ENCODE measurements at regions of chr4 and their contacts with region 1.

Region 1: GRCh38 chr4:56575820-56576429 is 70.3 kb downstream of the ARL9 start:
- DNase-seq: no peak

Region 2: DNA sequence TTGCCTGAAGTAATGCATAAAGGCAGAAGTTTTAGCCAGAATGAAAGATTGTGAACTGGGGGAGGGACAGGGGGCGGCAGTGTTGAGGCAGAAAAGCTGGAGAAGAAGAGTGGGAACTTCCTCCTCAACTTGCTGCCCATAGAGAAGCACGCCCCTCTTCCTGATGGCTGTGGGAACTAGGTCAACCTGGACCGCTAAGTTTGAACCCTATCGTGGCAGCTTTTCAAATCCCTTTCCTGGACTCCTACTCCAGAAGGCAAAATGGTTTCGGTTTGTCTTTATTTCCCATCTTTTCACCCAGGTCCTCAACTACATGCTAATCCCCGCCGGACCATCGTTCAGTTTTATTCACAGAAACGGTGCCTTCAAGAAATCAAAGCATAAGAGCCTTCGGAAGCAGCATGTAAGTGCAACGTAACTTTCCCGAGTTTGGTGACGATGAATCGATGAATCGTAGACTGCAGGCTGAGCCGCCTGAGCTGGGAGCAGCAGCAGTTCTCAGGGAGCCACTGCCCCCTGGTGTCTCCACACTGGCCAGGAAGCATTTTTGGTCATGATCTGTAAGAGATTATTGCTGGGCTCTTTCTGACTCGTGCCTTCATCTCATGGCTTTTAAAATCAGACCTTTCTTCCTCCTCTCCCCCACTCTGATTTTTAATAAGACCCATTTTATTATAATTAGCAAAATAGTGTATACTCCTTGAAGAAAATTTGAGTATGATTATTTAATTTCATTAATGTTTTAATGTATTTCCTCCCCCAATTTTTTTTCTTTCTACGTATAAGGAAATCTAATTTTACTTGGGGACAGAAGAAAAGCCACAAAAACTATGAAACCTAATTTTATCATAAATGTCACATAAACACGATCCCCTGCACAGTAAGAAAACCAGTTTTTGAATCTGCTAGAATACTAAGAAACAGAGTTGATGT is 224.2 kb after region 1 on chr4:
- intact Hi-C with region 1: loop called (anchors 2 kb)
- DNase-seq: peak; percentile 86